ENCODE measurements at regions of chrX and their contacts with region 1.

Region 1: DNA sequence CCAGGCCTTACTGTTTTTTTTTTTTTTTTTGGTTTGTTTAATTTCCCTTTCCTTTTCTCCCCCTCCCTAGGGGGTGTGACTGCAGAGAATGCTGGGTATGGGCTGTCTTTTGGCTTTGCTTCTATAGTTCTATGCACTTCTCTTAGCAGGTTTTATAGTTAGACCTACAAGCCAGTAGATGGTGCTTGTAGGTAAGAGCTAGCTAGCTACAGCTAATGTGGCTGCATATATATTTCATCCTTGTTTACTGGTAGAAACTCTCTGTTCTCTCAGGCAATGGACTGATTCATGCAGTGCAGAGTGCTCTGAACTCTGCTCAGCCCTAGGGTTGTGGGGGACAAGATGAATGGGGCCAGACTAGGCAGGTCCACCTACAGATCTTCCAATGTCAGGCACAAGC is 246.4 kb downstream of the SH2D1A start:
- DNase-seq: peak; percentile 9
- H3K4me3 ChIP-seq: no peak overlapping the region
- H3K27ac ChIP-seq: no peak overlapping the region
- H3K4me1 ChIP-seq: no peaks in the 10 kb centered on the region
- H3K27me3 ChIP-seq: no peaks in the 10 kb centered on the region
- CTCF ChIP-seq: 0 out of 2 replicates have a peak, but pooled peaks have one; percentile 12

Region 2: GRCh38 chrX:124504111-124504983 is 88.4 kb before region 1 on chrX:
- CTCF ChIA-PET with region 1: interaction called, 16 read pairs
- POLR2A ChIA-PET with region 1: no interaction called
- intact Hi-C with region 1: no loop called
- DNase-seq: no peak
- H3K4me3 ChIP-seq: no peak overlapping the region
- H3K27ac ChIP-seq: no peak overlapping the region
- H3K4me1 ChIP-seq: peaks cover 25% of the 10 kb centered on the region
- H3K27me3 ChIP-seq: no peaks in the 10 kb centered on the region
- CTCF ChIP-seq: no peak

Region 3: GRCh38 chrX:124805486-124805885 is 212.7 kb after region 1 on chrX:
- CTCF ChIA-PET with region 1: no interaction called
- POLR2A ChIA-PET with region 1: no interaction called
- intact Hi-C with region 1: no loop called
- DNase-seq: no peak
- H3K4me3 ChIP-seq: no peak overlapping the region
- H3K27ac ChIP-seq: no peak overlapping the region
- H3K4me1 ChIP-seq: no peaks in the 10 kb centered on the region
- H3K27me3 ChIP-seq: no peaks in the 10 kb centered on the region
- CTCF ChIP-seq: no peak

Region 4: GRCh38 chrX:124981420-124981819 is 388.7 kb after region 1 on chrX:
- CTCF ChIA-PET with region 1: no interaction called
- POLR2A ChIA-PET with region 1: no interaction called
- intact Hi-C with region 1: no loop called
- DNase-seq: no peak
- H3K4me3 ChIP-seq: no peak overlapping the region
- H3K27ac ChIP-seq: no peak overlapping the region
- H3K4me1 ChIP-seq: no peaks in the 10 kb centered on the region
- H3K27me3 ChIP-seq: no peaks in the 10 kb centered on the region
- CTCF ChIP-seq: no peak